Activated CD4-positive, alpha-beta T cell treated with anti-CD3 and anti-CD28 coated beads for 36 hours (primary cell): ENCODE measurements at regions of chr1 and their contacts with region 1.

Region 1: DNA sequence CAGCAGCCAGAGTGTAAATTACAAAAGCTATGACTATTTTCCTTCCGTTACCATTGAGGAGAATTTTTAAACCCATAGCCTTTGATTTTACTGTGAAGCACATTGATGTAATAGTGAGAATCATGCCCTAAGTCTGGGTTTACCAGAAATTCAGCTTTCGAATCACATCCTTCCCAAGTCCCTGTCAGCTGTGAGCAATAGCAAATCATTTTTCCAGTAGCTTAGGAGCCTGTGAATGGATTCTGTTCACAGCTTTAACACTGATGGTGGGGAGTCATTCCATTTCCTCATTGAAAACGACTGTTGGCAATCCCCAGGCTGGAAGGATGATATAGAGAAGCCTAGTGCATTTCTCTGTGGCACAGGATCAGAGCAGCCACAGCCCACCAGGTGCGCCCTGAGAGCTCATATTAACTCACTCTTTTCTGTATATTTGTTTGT is 82.2 kb upstream of the C1orf105 start:
- DNase-seq: peak; percentile 82
- ATAC-seq: peak; percentile 88
- H3K4me3 Mint-ChIP-seq: no peak overlapping the region
- H3K27ac Mint-ChIP-seq: peak overlapping the region; percentile 30
- H3K4me1 Mint-ChIP-seq: peaks cover 48% of the 10 kb centered on the region
- H3K27me3 Mint-ChIP-seq: peaks cover 2% of the 10 kb centered on the region

Region 2: GRCh38 chr1:172089768-172090510 is 248.4 kb before region 1 on chr1:
- CTCF ChIA-PET with region 1: no interaction called
- POLR2A ChIA-PET with region 1: no interaction called
- intact Hi-C with region 1: loop called in 1 of 2 experiments (anchors 5 kb)
- DNase-seq: peak; percentile 83
- ATAC-seq: peak; percentile 93
- H3K4me3 Mint-ChIP-seq: no peak overlapping the region
- H3K27ac Mint-ChIP-seq: no peak overlapping the region
- H3K4me1 Mint-ChIP-seq: peaks cover 2% of the 10 kb centered on the region
- H3K27me3 Mint-ChIP-seq: no peaks in the 10 kb centered on the region

Region 3: GRCh38 chr1:172269644-172270043 is 68.7 kb before region 1 on chr1:
- CTCF ChIA-PET with region 1: interaction called, 3 read pairs
- POLR2A ChIA-PET with region 1: interaction called, 3 read pairs
- intact Hi-C with region 1: loop called (anchors 1 kb)
- DNase-seq: peak; percentile 18
- ATAC-seq: peak; percentile 10
- H3K4me3 Mint-ChIP-seq: no peak overlapping the region
- H3K27ac Mint-ChIP-seq: peak overlapping the region; percentile 39
- H3K4me1 Mint-ChIP-seq: peaks cover 41% of the 10 kb centered on the region
- H3K27me3 Mint-ChIP-seq: no peaks in the 10 kb centered on the region

Region 4: GRCh38 chr1:172357753-172358385 is 19.6 kb after region 1 on chr1:
- CTCF ChIA-PET with region 1: interaction called, 45 read pairs
- POLR2A ChIA-PET with region 1: interaction called, 22 read pairs
- intact Hi-C with region 1: loop called (anchors 1 kb)
- DNase-seq: no peak
- ATAC-seq: peak; percentile 6
- H3K4me3 Mint-ChIP-seq: peak overlapping the region; percentile 39
- H3K27ac Mint-ChIP-seq: peak overlapping the region; percentile 34
- H3K4me1 Mint-ChIP-seq: peaks cover 62% of the 10 kb centered on the region
- H3K27me3 Mint-ChIP-seq: peaks cover 2% of the 10 kb centered on the region

Region 5: GRCh38 chr1:172380441-172381244 is 42.3 kb after region 1 on chr1:
- CTCF ChIA-PET with region 1: no interaction called
- POLR2A ChIA-PET with region 1: no interaction called
- intact Hi-C with region 1: loop called (anchors 1 to 2 kb)
- DNase-seq: peak; percentile 32
- ATAC-seq: peak; percentile 98
- H3K4me3 Mint-ChIP-seq: peak overlapping the region; percentile 43
- H3K27ac Mint-ChIP-seq: peak overlapping the region; percentile 91
- H3K4me1 Mint-ChIP-seq: peaks cover 31% of the 10 kb centered on the region
- H3K27me3 Mint-ChIP-seq: no peaks in the 10 kb centered on the region